ENCODE measurements at regions of chr5 and their contacts with region 1.

Region 1: DNA sequence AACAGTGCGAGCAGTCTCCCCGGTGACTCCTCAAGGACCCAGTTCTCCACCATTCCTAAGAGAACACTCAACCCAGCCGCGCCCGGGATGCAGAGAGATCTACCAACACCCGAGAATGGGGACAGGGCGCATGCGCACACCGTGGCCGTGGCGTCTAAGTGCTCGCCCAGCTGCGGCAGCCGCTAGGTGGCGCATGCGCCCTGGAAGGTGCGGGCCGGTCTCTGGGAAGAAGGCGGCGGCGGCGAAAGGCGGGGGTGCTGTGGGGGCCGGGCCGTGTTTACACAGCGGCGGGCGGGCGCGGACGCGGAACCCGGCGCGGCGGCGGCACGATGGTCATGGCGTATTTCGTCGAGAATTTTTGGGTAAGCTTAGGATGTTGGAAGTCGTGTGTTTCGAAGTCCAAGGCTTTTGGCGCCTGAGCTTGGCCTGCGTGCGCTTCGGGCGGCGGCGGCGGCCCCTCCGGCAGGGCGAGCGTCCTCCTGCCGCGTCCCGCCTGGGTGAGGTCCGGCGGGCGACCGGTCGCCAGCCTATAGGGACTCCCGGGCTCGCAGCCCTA is at the start of gene FCHO2:
- DNase-seq: peak; percentile 92
- H3K4me3 Mint-ChIP-seq: peak within 1 kb of the TSS; percentile 86
- H3K27ac Mint-ChIP-seq: peak within 1 kb of the TSS; percentile 70
- H3K4me1 Mint-ChIP-seq: peaks cover 15% of the 10 kb centered on the region
- H3K27me3 Mint-ChIP-seq: peaks cover 57% of the 10 kb centered on the region
- total RNA-seq, gene FCHO2: 0.93 and 2.2 TPM in 2 replicates

Region 2: GRCh38 chr5:72847989-72848473 is 107.8 kb before region 1 on chr5:
- intact Hi-C with region 1: loop called (anchors 2 kb)
- DNase-seq: peak; percentile 80
- H3K4me3 Mint-ChIP-seq: peak overlapping the region; percentile 96
- H3K27ac Mint-ChIP-seq: peak overlapping the region; percentile 99
- H3K4me1 Mint-ChIP-seq: peaks cover 44% of the 10 kb centered on the region
- H3K27me3 Mint-ChIP-seq: peaks cover 7% of the 10 kb centered on the region

Region 3: DNA sequence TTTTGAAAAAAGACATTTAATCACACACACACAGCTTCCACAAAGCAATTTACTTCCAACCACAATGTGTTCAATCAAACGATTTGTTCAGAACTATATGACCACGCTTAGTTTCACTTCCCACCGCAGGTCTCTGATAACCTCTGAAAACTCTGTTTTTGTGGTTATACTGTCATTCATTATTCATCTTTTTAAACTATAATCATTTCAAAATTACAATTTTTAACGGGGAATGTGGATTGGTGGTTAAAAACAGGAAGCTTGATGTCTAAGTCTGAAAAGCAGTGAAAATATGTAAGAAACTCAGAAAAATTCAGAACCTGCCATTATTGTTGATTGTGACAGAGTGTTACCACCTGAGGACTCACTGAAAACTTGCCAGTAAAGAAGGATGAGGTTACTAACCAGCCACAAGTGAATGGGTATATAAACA is 204.4 kb after region 1 on chr5:
- intact Hi-C with region 1: loop called (anchors 1 kb)
- DNase-seq: peak; percentile 38
- H3K4me3 Mint-ChIP-seq: no peak overlapping the region
- H3K27ac Mint-ChIP-seq: peak overlapping the region; percentile 64
- H3K4me1 Mint-ChIP-seq: peaks cover 24% of the 10 kb centered on the region
- H3K27me3 Mint-ChIP-seq: peaks cover 76% of the 10 kb centered on the region

Region 4: DNA sequence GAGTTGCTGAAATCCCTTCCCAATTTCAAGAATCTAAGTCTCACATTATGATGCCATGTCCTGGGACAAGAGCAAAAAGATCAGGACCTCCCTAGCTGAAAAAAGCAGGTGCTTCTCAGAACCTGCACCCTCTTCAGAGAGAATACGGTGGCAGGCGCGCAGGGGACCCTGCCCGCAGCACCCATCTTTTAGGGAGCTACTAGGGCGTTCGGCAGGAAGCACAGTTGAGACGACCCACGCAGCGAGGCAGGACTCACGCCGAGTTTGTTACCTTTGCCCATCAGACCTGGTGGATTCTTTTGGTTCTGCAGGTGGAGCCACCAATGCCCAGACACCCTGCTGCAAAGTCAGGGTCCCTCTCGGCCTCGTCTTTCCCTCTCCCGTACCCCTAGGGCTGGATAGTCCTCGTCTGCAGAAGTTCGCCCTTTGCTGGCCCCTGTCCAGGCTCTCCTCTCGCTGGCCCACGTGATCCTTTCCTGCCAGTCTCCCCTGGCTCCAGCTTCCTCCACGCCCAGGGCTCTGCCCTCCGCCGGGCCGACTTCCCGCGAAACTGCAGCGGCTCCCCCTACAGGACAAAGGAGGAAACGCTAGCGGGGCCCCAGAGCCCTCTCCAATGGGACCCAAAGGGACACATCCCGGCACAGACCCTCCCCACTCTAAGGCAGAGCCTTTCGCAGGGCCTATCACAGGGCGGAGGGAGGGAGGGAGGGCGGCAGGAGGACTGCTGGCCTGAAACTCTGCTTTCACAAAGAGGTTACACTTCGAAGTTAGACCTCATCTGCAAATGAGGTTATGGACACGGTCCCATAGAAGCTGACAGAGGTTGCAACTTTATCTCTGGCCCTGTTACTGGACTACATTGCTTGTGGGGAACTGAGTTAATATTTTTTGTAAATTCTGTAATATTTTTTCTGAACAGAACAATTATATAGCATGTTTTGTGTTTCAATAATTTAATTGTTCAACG is 246.0 kb after region 1 on chr5:
- intact Hi-C with region 1: loop called (anchors 1 kb)
- DNase-seq: peak; percentile 44
- H3K4me3 Mint-ChIP-seq: no peak overlapping the region
- H3K27ac Mint-ChIP-seq: no peak overlapping the region
- H3K4me1 Mint-ChIP-seq: no peaks in the 10 kb centered on the region
- H3K27me3 Mint-ChIP-seq: peaks cover 19% of the 10 kb centered on the region

Region 5: DNA sequence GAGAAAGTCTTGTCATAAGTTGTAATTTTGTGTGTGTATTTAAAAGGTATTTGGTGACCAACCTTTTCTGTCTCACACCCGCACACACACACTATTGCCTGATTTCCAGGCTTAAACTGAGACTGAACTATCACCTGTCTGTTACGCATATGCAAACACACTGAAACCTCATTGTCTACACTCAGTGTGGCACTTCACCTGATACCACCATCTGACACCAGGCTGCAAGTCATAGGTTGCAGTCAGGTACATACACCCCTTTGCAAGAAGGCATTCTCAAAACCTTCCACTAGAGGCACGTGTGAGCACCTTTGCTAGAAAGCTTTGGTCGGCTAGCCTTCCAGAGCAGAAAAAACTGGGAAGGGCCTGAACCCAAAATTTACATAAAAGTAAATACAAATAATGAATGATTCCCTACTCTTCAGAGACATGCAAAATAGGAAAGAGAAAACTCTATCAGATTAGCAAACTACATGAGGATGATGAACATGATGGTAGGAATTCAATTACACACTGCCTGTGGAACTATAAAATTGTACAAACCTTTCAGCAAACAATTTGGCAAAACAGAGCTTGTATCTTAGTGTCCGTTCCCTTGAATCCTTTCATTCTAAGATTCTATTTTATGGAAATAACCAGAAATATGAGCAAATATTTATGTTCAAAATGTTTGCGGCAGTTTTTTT is 498.6 kb after region 1 on chr5:
- intact Hi-C with region 1: loop called (anchors 5 kb)
- DNase-seq: no peak
- H3K4me3 Mint-ChIP-seq: no peak overlapping the region
- H3K27ac Mint-ChIP-seq: no peak overlapping the region
- H3K4me1 Mint-ChIP-seq: peaks cover 7% of the 10 kb centered on the region
- H3K27me3 Mint-ChIP-seq: peaks cover 52% of the 10 kb centered on the region

Region 6: GRCh38 chr5:73498057-73499008 is 542.5 kb after region 1 on chr5 and contains the start of gene BTF3:
- intact Hi-C with region 1: loop called (anchors 1 kb)
- DNase-seq: peak; percentile 92
- H3K4me3 Mint-ChIP-seq: peak within 1 kb of the TSS; percentile 99
- H3K27ac Mint-ChIP-seq: peak within 1 kb of the TSS; percentile 99
- H3K4me1 Mint-ChIP-seq: peaks cover 39% of the 10 kb centered on the region
- H3K27me3 Mint-ChIP-seq: peaks cover 12% of the 10 kb centered on the region
- total RNA-seq, gene BTF3: 913 and 929 TPM in 2 replicates